Left cardiac atrium (tissue), 4 donors: ENCODE measurements at regions of chr9 and their contacts with region 1.

Region 1: DNA sequence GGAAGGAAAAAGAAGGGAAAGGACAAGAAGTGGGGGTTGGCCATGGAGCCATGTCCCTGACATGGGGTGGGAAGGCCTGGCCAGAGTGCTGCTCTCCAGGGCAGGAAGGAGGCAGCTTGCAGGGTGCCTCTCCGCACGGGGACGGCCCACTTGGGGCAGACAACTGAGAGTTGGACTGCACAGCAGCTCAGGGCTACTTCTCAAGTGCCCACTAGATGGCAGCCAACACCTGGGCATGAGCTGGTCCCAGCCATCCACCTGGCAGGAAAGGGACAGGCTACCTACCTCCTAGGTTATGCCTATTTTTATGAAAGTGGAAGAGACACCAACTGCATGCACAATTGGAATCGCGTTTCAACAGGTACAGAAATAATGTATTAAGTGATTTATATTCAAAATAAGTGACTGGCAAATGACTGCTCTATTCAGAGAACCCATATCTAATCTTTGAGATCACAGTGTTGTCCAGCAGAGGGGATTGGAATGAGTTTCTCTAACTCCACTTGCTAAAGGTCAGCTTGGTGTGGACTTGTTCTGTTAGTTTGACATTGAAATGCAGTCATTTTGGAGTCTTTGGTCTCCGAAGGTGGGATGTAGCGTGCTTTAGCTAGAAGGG is 113.4 kb downstream of the SYK start:
- DNase-seq: peak; percentile 76
- ATAC-seq: peak; percentile 94 to 95

Region 2: DNA sequence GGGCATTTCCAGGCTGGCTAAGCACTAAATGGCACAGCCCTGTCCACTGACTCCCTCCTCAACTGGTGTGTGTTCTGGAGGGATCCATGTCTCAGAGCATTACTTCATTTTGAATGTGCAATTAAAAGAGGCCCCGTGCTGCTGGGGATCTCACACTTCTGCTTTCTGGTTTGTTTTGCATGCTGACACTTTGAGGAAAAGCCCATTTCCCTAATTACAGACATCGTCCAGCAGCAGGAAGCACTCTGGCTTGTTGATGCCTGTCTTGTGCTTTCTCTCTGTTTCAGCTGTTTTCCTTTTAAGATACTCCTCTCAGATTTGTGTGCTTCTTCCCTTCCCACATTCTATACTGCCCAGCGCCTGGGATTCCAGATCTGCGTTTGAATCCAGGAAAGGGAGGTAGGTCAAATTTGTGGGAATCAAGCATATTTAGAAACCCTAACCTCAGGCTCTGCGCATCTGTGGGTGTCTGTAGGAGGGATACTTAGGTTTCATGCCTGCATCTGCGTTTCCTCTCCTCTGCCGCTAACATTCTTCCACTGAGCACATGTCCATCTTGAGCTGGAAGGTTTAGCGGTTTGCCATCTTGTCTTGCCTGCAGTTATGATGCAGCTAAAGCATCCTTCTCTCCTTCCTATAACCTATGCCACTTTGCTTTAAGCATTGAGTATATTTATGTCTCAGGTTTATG is 87.7 kb before region 1 on chr9:
- intact Hi-C with region 1: no loop called
- DNase-seq: no peak
- ATAC-seq: peak; percentile 50 to 73

Region 3: DNA sequence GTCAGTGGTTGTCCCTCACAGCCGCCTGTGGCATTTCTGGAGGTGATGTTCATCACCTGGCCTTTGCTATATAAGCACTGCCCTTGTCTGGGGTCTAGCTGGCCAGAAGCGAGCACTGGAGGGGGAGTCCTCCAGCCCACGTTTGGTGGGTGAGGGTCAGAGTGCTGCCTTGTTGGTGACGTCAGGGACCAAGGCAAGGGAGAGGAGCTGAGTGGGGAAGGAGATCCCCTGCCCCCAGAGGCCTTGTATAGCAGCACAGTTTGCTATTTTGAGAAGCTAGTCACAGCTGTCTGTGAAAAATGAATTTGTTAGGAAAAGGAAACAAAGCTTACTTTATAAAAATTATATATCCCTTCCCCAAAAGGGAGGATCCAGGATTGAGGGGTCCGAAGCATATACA is 63.5 kb before region 1 on chr9:
- intact Hi-C with region 1: no loop called
- DNase-seq: no peak
- ATAC-seq: no peak

Region 4: GRCh38 chr9:90868555-90868954 is 46.4 kb before region 1 on chr9:
- intact Hi-C with region 1: no loop called
- DNase-seq: no peak
- ATAC-seq: no peak

Region 5: GRCh38 chr9:91433180-91433579 is 518.2 kb after region 1 on chr9:
- intact Hi-C with region 1: loop called (anchors 5 kb)
- DNase-seq: no peak
- ATAC-seq: peak; percentile 55 to 87

Region 6: GRCh38 chr9:91676046-91676445 is 761.1 kb after region 1 on chr9:
- intact Hi-C with region 1: loop called (anchors 5 to 10 kb)
- DNase-seq: no peak
- ATAC-seq: no peak

Region 7: GRCh38 chr9:91681461-91682305 is 766.7 kb after region 1 on chr9:
- intact Hi-C with region 1: loop called (anchors 5 to 10 kb)
- DNase-seq: peak; percentile 84
- ATAC-seq: peak; percentile 96 to 97

Region 8: GRCh38 chr9:91727316-91727861 is 812.4 kb after region 1 on chr9:
- intact Hi-C with region 1: loop called in 1 of 2 experiments (anchors 5 kb)
- DNase-seq: no peak
- ATAC-seq: peak; percentile 51 to 60

Region 9: DNA sequence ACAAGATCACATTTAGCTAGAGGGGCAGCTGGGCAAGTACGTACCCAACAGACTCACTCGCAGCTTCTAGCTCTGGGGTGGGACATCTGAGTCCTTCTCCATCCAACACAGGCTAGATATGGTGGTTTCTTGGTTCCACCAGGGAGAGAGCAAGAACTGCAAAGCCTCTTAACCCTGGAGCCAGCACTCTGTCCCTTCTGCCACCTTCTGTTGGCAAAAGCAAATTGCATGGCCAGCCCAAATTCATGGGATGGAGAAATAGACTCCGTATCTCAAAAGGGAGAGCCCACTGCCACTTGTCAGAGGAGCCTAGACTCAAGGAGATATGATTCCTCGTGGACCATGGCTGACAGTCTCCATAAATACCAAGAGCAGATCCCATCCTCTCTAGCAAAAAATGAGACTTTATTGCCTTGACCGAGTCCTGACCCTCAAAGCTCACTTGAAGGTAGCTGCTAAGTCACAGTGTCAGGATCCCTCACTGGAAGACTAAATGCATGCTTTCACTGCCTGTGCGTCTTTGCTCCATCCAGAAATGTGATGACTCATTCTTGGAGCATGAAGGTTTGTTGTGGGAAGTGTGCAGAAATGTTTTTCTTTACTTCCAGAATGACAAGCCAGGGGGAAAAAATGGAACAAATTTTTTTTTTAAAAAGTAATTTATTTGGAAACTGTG is 1063.9 kb after region 1 on chr9:
- intact Hi-C with region 1: loop called in 1 of 2 experiments (anchors 10 kb)
- DNase-seq: no peak
- ATAC-seq: peak; percentile 72 to 81